Adrenal gland (tissue), 19 donors: ENCODE measurements at regions of chr5 and their contacts with region 1.

Region 1: GRCh38 chr5:5492087-5492933 is 69.8 kb downstream of the ICE1 start:
- DNase-seq: peak in 6 of 7 donors; percentile 20 to 57 (median 44)
- H3K4me3 ChIP-seq: no peak overlapping the region
- H3K27ac ChIP-seq: no peak overlapping the region
- H3K4me1 ChIP-seq: peaks cover 0 to 6% of the 10 kb centered on the region in 2 donors
- H3K27me3 ChIP-seq: no peaks in the 10 kb centered on the region
- CTCF ChIP-seq: peak; percentile 62 to 84 (median 74)
- POLR2A ChIP-seq: no peak

Region 2: DNA sequence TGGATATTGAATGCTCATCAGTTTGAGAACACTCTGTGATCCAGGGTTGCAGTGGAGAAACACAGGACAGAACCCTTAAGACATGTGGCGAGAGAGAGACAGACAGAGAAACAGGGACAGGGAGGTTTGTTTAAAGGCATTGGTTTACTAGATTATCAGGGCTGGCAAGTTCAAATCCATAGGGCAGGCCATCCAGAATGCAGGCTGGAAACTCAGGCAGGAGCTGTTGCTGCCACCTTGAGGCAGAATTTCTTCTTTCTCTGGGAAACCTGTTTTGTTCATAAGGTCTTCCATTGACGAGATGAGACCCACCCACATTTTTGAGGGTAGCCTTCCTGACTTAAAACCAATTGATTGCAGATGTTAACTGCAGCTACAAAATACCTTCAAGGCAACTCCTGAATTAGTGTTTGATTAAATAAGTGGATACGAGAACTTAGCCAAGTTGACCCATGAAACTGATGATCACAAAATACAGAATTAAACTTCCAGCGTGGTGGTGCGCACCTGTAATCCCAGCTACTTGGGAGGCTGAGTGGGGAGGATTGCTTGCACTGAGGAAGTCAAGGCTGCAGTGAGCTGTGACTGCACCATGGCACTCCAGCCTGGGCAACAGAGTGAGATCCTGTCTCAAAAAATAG is 1084.7 kb after region 1 on chr5:
- intact Hi-C with region 1: loop called (anchors 10 kb)
- DNase-seq: peak in 5 of 7 donors; percentile 22 to 61 (median 39)
- H3K4me3 ChIP-seq: no peak overlapping the region
- H3K27ac ChIP-seq: no peak overlapping the region
- H3K4me1 ChIP-seq: no peaks in the 10 kb centered on the region
- H3K27me3 ChIP-seq: no peaks in the 10 kb centered on the region
- CTCF ChIP-seq: peak; percentile 22 to 56 (median 44)
- POLR2A ChIP-seq: no peak

Region 3: GRCh38 chr5:6745706-6746222 is 1253.5 kb after region 1 on chr5:
- intact Hi-C with region 1: loop called in 1 of 2 experiments (anchors 10 kb)
- DNase-seq: peak in 2 of 7 donors; percentile 40 to 51
- H3K4me3 ChIP-seq: no peak overlapping the region
- H3K27ac ChIP-seq: peak overlapping the region in 1 of 5 donors; percentile 21
- H3K4me1 ChIP-seq: no peaks in the 10 kb centered on the region
- H3K27me3 ChIP-seq: no peaks in the 10 kb centered on the region
- CTCF ChIP-seq: peak; percentile 58 to 88 (median 85)
- POLR2A ChIP-seq: no peak